Activated CD4-positive, alpha-beta memory T cell treated with anti-CD3 and anti-CD28 coated beads, Interleukin-2, amount 10 ng/mL, durations not matched to agents 7 days and 5 days (primary cell): ENCODE measurements at regions of chr11 and their contacts with region 1.

Region 1: GRCh38 chr11:59802639-59803176 is 7.9 kb downstream of the MRPL16 start:
- DNase-seq: peak; percentile 43
- H3K4me3 Mint-ChIP-seq: no peak overlapping the region
- H3K27ac Mint-ChIP-seq: peak overlapping the region; percentile 60
- H3K4me1 Mint-ChIP-seq: peaks cover 31% of the 10 kb centered on the region
- H3K27me3 Mint-ChIP-seq: no peaks in the 10 kb centered on the region

Region 2: DNA sequence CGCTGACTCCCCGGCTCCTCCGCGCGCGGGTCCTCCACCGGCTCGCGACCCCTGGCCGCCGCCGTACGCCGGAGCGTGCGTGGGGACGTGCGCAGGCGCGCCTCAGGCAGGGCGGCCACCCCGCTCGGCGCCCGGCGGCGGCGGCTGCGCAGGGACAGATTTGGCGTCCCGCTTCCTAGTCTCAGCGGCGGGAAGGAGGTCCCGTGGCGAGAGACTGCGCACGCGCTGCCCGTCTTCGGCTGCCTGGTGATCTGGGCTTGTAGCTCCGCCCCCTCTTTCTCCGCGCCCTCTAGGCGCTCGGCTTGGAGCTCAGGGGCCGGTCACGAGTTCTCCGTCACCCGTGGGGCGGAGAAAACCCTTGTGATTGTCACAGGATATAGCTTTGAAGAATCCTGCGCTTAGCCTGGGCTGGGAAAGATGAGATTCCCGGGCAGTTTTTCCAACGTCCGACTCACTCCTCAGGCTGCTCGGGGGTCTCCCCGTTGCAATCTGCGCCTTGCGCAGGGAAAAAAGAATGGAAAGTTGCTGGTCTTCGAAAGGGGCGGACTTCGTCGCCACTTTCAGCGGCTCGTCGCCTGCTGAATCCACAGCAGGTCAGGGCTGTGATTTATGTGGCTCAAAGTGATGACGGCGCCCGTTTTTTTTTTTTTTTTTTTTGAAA is 133.6 kb before region 1 on chr11 and contains the start of gene PATL1:
- CTCF ChIA-PET with region 1: interaction called, 3 read pairs
- POLR2A ChIA-PET with region 1: interaction called, 10 read pairs
- DNase-seq: peak; percentile 99
- H3K4me3 Mint-ChIP-seq: peak within 1 kb of the TSS; percentile 95
- H3K27ac Mint-ChIP-seq: peak within 1 kb of the TSS; percentile 98
- H3K4me1 Mint-ChIP-seq: peaks cover 44% of the 10 kb centered on the region
- H3K27me3 Mint-ChIP-seq: no peaks in the 10 kb centered on the region
- total RNA-seq, gene PATL1: 56.4 to 56.8 TPM

Region 3: DNA sequence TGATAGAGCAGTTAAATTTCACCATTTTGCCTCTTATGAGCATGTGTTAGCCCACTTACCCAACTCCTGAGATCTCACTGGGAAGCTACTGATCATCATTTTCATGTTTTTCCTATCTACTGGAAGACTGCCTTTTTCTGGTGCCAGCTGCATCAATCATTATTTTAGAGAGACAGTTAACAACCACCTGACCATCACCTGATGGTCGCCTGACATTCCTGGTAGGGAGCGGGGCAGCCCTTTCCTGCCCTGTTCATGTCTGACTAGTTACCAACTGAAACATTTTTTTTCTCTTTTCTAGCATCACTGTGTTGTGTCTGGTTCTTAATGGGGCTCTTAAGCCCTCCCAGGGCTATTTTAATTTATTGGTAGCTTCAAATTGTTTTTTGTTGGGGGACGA is 113.7 kb before region 1 on chr11:
- CTCF ChIA-PET with region 1: no interaction called
- POLR2A ChIA-PET with region 1: no interaction called
- DNase-seq: no peak
- H3K4me3 Mint-ChIP-seq: no peak overlapping the region
- H3K27ac Mint-ChIP-seq: no peak overlapping the region
- H3K4me1 Mint-ChIP-seq: no peaks in the 10 kb centered on the region
- H3K27me3 Mint-ChIP-seq: peaks cover 30% of the 10 kb centered on the region

Region 4: DNA sequence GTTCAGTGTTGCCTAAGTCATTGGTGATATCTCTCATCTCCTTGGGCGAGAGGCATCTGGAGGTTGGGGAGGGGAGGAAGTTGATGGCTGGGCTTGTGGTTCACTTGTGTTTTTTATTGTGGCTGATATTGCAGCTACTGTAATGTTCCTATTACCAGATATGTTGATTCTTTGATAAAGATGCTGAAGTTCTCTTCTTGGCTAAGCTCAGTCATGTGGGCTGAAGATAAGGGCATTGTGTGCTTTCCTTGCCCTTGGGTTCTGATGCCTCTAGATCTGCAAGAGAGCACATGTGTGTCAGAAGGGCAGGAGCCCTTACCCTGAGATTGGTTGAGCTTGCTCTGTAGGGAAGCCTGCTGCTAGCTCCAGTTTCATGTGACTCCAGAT is 35.5 kb before region 1 on chr11:
- CTCF ChIA-PET with region 1: interaction called, 10 read pairs
- POLR2A ChIA-PET with region 1: interaction called, 9 read pairs
- DNase-seq: peak; percentile 63
- H3K4me3 Mint-ChIP-seq: no peak overlapping the region
- H3K27ac Mint-ChIP-seq: no peak overlapping the region
- H3K4me1 Mint-ChIP-seq: peaks cover 35% of the 10 kb centered on the region
- H3K27me3 Mint-ChIP-seq: no peaks in the 10 kb centered on the region

Region 5: DNA sequence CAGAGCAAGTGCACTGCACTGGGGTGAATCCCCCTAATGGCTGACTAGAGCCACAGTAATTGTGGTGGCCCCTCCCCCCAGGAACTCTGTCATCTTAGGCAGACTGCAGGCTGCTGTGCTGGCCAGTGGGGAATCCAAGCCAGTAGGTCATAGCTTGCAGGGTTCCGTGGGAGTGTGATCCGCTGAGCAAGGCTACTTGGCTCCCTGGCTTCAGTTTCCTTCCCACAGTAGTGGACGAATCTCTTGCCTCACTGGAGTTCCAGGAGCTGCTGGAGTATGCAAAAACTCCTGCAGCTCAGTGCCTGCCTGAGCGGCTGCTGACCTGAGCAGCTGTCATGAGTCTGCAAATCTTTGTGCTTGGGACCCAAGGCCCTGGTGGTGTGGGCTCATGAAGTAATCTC is 89.1 kb after region 1 on chr11:
- CTCF ChIA-PET with region 1: no interaction called
- POLR2A ChIA-PET with region 1: no interaction called
- DNase-seq: no peak
- H3K4me3 Mint-ChIP-seq: no peak overlapping the region
- H3K27ac Mint-ChIP-seq: no peak overlapping the region
- H3K4me1 Mint-ChIP-seq: no peaks in the 10 kb centered on the region
- H3K27me3 Mint-ChIP-seq: peaks cover 14% of the 10 kb centered on the region